OCI-LY7 (cell line): ENCODE measurements at regions of chr1 and their contacts with region 1.

Region 1: GRCh38 chr1:211323156-211324063 is 3.2 kb upstream of the TRAF5 start:
- DNase-seq: peak; percentile 79
- H3K4me3 ChIP-seq: no peak overlapping the region
- H3K27ac ChIP-seq: no peak overlapping the region
- H3K4me1 ChIP-seq: peaks cover 18% of the 10 kb centered on the region
- CTCF ChIP-seq: peak; percentile 97

Region 2: GRCh38 chr1:210989905-210990304 is 333.5 kb before region 1 on chr1:
- CTCF ChIA-PET with region 1: no interaction called
- POLR2A ChIA-PET with region 1: no interaction called
- intact Hi-C with region 1: no loop called
- DNase-seq: no peak
- H3K4me3 ChIP-seq: no peak overlapping the region
- H3K27ac ChIP-seq: no peak overlapping the region
- H3K4me1 ChIP-seq: no peaks in the 10 kb centered on the region
- CTCF ChIP-seq: no peak

Region 3: GRCh38 chr1:211267204-211267857 is 56.1 kb before region 1 on chr1:
- CTCF ChIA-PET with region 1: no interaction called
- POLR2A ChIA-PET with region 1: interaction called, 4 read pairs
- intact Hi-C with region 1: loop called (anchors 5 kb)
- DNase-seq: no peak
- H3K4me3 ChIP-seq: no peak overlapping the region
- H3K27ac ChIP-seq: no peak overlapping the region
- H3K4me1 ChIP-seq: no peaks in the 10 kb centered on the region
- CTCF ChIP-seq: no peak

Region 4: DNA sequence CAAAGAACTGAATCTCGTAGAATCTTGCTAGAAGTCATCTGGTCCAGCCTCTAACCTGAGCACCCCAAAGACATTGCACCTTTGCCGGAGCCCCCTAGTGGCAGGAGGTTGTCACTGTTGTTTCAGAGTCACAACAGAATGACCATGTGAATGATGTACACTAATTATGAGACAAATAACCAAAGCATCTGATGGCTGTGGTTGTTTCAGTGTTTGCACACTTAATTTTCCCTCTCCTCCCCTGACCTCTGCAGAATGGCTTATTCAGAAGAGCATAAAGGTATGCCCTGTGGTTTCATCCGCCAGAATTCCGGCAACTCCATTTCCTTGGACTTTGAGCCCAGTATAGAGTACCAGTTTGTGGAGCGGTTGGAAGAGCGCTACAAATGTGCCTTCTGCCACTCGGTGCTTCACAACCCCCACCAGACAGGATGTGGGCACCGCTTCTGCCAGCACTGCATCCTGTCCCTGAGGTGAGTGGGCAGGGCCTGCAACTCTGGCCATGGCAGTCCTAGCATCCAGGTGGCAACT is 29.6 kb after region 1 on chr1:
- CTCF ChIA-PET with region 1: interaction called, 3 read pairs
- POLR2A ChIA-PET with region 1: interaction called, 14 read pairs
- intact Hi-C with region 1: loop called (anchors 1 kb)
- DNase-seq: peak; percentile 72
- H3K4me3 ChIP-seq: no peak overlapping the region
- H3K27ac ChIP-seq: no peak overlapping the region
- H3K4me1 ChIP-seq: peaks cover 14% of the 10 kb centered on the region
- CTCF ChIP-seq: peak; percentile 93

Region 5: GRCh38 chr1:211476200-211476849 is 152.9 kb after region 1 on chr1:
- CTCF ChIA-PET with region 1: interaction called, 14 read pairs
- POLR2A ChIA-PET with region 1: interaction called, 3 read pairs
- intact Hi-C with region 1: loop called (anchors 1 kb)
- DNase-seq: peak; percentile 77
- H3K4me3 ChIP-seq: no peak overlapping the region
- H3K27ac ChIP-seq: no peak overlapping the region
- H3K4me1 ChIP-seq: no peaks in the 10 kb centered on the region
- CTCF ChIP-seq: peak; percentile 99

Region 6: GRCh38 chr1:211578640-211579433 is 255.4 kb after region 1 on chr1 and contains the start of gene SLC30A1:
- CTCF ChIA-PET with region 1: no interaction called
- POLR2A ChIA-PET with region 1: no interaction called
- intact Hi-C with region 1: loop called (anchors 5 kb)
- DNase-seq: peak; percentile 99
- H3K4me3 ChIP-seq: peak within 1 kb of the TSS; percentile 83
- H3K27ac ChIP-seq: peak within 1 kb of the TSS; percentile 81
- H3K4me1 ChIP-seq: peaks cover 40% of the 10 kb centered on the region
- CTCF ChIP-seq: no peak
- total RNA-seq, gene SLC30A1: 6.1 and 6.5 TPM in 2 replicates

Region 7: GRCh38 chr1:211675230-211676105 is 352.1 kb after region 1 on chr1 and contains the start of gene NEK2:
- CTCF ChIA-PET with region 1: no interaction called
- POLR2A ChIA-PET with region 1: no interaction called
- intact Hi-C with region 1: loop called (anchors 5 kb)
- DNase-seq: peak; percentile 96
- H3K4me3 ChIP-seq: peak within 1 kb of the TSS; percentile 86
- H3K27ac ChIP-seq: peak within 1 kb of the TSS; percentile 79
- H3K4me1 ChIP-seq: peaks cover 67% of the 10 kb centered on the region
- CTCF ChIP-seq: no peak
- total RNA-seq, gene NEK2: 55.9 and 72.4 TPM in 2 replicates